Activated B cell treated with CpG ODN at 0.5 μM for 24 hours (primary cell): ENCODE measurements at regions of chr2 and their contacts with region 1.

Region 1: DNA sequence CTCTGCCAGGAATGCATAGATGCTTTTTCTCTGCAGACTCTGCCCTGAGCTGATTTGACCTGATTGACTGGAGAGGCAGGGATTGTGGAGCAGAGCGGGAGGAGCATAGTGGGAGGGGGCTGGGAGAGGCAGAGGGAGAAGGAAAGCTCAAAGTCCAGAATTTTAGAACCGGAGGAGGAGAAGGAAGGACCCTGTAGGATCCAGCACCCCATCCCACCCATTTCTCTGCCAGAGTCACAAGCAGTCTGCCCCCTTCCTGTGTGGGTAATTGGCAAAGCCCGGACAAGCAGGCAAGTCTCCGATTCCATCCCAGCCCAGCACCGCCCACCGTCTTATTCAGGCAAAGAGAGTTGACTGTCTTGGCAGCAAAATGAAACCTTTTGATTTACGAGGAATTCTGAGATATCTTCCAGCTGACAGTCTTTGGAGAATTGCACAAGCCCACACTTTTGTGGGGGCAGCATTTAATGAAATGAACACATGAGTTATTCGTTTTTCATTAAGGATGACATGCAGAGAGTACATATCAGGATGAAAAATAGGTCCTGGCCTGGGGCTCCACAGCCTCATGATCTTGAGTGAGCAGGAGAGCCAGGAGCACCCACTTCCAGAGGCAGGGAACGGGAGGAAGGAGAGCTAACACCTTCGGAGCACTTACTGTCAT is 103.1 kb downstream of the MCFD2 start:
- DNase-seq: no peak
- ATAC-seq: no peak
- H3K4me3 Mint-ChIP-seq: no peak overlapping the region
- H3K27ac Mint-ChIP-seq: no peak overlapping the region
- H3K4me1 Mint-ChIP-seq: no peaks in the 10 kb centered on the region
- H3K27me3 Mint-ChIP-seq: peaks cover 18% of the 10 kb centered on the region
- CTCF ChIP-seq: no peak

Region 2: DNA sequence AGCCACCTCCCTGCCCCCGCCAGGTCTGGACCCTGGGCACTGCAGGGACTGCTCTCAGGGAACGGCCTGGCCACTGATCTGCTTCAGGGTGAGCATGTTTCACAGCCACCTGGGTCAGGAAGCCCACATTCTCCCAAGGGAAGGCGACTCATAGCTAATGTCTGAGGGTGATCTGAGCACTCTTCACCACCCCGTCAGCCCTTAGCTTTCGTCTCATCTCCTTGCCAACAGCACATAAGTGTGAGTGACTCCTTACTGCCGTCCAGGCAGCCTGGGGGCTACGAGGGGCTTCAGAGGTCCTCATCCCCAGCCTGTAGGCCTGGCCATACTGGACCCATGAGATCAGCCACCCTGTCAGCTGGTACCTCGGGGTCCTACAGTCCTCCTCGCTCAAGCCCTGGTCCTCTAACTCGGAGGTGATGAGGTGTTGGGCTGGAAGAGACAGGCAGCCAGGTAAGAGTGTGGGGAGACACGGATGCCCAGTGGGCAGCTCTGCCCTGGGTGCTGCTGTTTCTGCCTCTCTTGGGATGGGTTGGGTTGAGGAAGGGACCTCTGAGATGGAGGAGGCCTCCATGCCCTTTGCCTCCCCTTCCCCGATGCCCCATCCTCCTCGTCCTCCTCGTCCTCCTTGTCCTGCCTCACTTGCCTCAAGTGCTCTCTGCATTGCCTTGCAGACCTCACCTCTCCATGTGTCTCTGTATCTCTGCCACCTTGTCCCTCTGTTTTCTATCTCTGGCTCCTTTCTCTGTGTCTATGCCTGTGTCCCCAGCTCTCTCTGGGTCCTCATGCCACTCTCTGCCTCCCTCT is 15.3 kb after region 1 on chr2:
- CTCF ChIA-PET with region 1: no interaction called
- POLR2A ChIA-PET with region 1: no interaction called
- intact Hi-C with region 1: no loop called
- DNase-seq: no peak
- ATAC-seq: peak; percentile 56
- H3K4me3 Mint-ChIP-seq: no peak overlapping the region
- H3K27ac Mint-ChIP-seq: no peak overlapping the region
- H3K4me1 Mint-ChIP-seq: no peaks in the 10 kb centered on the region
- H3K27me3 Mint-ChIP-seq: peaks cover 19% of the 10 kb centered on the region
- CTCF ChIP-seq: no peak

Region 3: GRCh38 chr2:46854261-46854660 is 41.8 kb after region 1 on chr2:
- CTCF ChIA-PET with region 1: no interaction called
- POLR2A ChIA-PET with region 1: interaction called, 11 read pairs
- intact Hi-C with region 1: no loop called
- DNase-seq: no peak
- ATAC-seq: no peak
- H3K4me3 Mint-ChIP-seq: no peak overlapping the region
- H3K27ac Mint-ChIP-seq: no peak overlapping the region
- H3K4me1 Mint-ChIP-seq: no peaks in the 10 kb centered on the region
- H3K27me3 Mint-ChIP-seq: peaks cover 5% of the 10 kb centered on the region
- CTCF ChIP-seq: no peak

Region 4: DNA sequence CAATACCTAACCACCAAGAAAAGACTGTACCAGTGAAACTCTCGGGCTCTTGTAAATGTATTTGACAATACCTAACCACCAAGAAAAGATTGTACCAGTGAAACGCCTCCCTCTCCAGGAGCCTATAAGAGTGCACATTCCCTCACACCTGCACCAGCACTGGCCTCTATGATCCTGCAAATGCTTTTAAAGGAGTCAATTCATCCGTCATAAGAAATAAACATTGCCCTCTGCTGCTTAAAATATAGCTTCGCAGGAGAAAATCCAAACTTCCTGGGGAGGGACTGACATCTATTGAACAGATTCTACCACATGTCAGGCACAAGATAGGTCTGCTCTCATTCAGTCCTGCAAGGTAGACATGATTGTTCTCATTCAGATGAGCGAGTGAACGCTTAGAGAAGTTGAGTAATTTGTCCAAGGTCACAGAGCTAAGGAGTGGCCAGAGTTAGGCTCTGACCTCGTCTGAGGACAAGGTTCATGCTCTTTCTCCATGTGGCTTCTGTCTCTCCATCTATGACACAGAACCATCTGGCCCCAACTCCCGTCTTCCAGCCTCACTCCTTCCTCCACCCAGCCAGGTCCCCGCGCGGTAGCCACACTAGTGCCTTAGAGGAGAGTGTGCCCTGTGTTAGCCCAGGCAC is 64.4 kb after region 1 on chr2:
- CTCF ChIA-PET with region 1: no interaction called
- POLR2A ChIA-PET with region 1: no interaction called
- intact Hi-C with region 1: no loop called
- DNase-seq: no peak
- ATAC-seq: no peak
- H3K4me3 Mint-ChIP-seq: no peak overlapping the region
- H3K27ac Mint-ChIP-seq: no peak overlapping the region
- H3K4me1 Mint-ChIP-seq: no peaks in the 10 kb centered on the region
- H3K27me3 Mint-ChIP-seq: peaks cover 2% of the 10 kb centered on the region
- CTCF ChIP-seq: no peak

Region 5: GRCh38 chr2:47002480-47003381 is 190.2 kb after region 1 on chr2:
- CTCF ChIA-PET with region 1: no interaction called
- POLR2A ChIA-PET with region 1: no interaction called
- intact Hi-C with region 1: no loop called
- DNase-seq: no peak
- ATAC-seq: no peak
- H3K4me3 Mint-ChIP-seq: no peak overlapping the region
- H3K27ac Mint-ChIP-seq: peak overlapping the region; percentile 24
- H3K4me1 Mint-ChIP-seq: no peaks in the 10 kb centered on the region
- H3K27me3 Mint-ChIP-seq: no peaks in the 10 kb centered on the region
- CTCF ChIP-seq: no peak